ENCODE measurements at regions of chr2 and their contacts with region 1.

Region 1: DNA sequence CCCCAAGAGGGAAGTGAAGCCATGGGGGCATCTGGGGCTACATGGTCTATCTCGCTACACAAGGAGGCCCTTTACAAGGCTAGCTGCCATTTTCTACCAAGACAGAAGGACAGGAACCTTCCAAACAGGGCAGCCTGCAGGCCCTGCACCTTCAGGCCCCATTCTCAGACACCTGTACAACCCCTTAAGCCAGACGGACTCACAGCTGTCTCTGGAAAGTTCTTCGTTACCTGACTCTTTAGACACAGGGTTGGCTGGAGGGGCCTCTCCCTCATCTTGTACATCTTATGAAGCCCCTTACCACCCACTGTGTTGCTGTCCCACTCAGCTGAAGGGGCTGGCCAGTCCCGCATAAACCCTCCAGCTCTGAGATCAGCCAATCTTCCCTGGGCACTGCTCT is 17.2 kb downstream of the TMEM127 start:
- DNase-seq: no peak

Region 2: GRCh38 chr2:96265840-96266679 is 17.4 kb after region 1 on chr2 and contains the starts of genes CIAO1 and TMEM127:
- CTCF ChIA-PET with region 1: interaction called, 10 read pairs
- POLR2A ChIA-PET with region 1: interaction called, 5 read pairs
- DNase-seq: peak; percentile 97

Region 3: GRCh38 chr2:96291751-96292150 is 43.1 kb after region 1 on chr2:
- CTCF ChIA-PET with region 1: no interaction called
- POLR2A ChIA-PET with region 1: no interaction called
- DNase-seq: no peak

Region 4: GRCh38 chr2:96374211-96374951 is 125.8 kb after region 1 on chr2:
- CTCF ChIA-PET with region 1: no interaction called
- POLR2A ChIA-PET with region 1: no interaction called
- DNase-seq: no peak